ENCODE measurements at regions of chr1 and their contacts with region 1.

Region 1: DNA sequence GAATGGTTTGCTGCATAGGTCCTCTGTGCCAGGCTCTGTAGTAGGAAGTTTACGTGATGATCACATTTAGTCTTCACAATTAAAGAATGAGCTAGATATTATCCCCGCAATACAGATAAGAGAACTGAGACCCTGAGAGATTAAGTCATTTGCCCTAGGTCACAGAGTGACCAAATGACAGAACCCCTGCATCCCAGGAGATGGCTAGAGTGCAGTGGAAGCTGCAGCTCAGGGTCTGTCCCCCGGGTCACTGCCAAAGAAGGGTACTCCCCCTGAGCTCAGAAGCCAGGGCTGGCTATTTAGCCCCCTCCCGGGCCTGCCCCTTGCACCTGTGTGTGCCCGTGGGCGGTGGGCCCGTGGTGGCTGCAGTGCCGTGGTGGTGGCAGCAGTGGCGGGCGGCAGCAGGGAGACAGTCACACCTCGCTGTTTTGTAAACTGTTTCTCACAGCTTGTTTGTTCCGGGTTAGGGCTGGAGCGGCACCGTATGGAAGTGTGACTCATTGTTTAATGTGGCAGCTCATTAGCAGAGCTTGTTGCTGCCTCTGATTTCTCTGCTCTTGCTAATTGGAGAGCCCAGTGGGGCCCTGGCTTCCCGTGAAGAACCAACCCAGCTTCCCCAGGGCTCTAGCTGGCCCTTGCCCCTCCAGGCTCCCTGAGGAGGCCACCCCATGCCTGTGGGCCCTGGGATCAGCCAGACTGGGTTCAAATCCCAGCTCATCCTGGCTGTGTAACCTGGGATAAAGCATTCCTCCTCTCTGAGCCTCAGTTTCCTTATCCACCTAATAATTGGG is 19.3 kb upstream of the FOXO6 start:
- DNase-seq: peak in 1 of 2 donors; percentile 71
- ATAC-seq: peak; percentile 62 to 81
- H3K4me3 ChIP-seq: peak overlapping the region in 1 of 4 donors; percentile 6
- H3K27ac ChIP-seq: peak overlapping the region; percentile 86 to 98 (median 92)
- H3K4me1 ChIP-seq: peaks cover 33% of the 10 kb centered on the region in 2 donors
- H3K27me3 ChIP-seq: no peaks in the 10 kb centered on the region
- CTCF ChIP-seq: peak in 1 of 5 experiments; percentile 9
- POLR2A ChIP-seq: no peak

Region 2: GRCh38 chr1:41322835-41323627 is 18.9 kb before region 1 on chr1:
- in situ Hi-C with region 1: no loop called
- intact Hi-C with region 1: loop called (anchors 2 kb)
- DNase-seq: peak; percentile 47 to 75
- ATAC-seq: peak; percentile 78 to 83
- H3K4me3 ChIP-seq: no peak overlapping the region
- H3K27ac ChIP-seq: no peak overlapping the region
- H3K4me1 ChIP-seq: peaks cover 13 to 28% of the 10 kb centered on the region in 2 donors
- H3K27me3 ChIP-seq: no peaks in the 10 kb centered on the region
- CTCF ChIP-seq: peak; percentile 72 to 86 (median 75)
- POLR2A ChIP-seq: no peak

Measured in gastrocnemius medialis (tissue), 4 donors.